B cell (primary cell): ENCODE measurements at regions of chr1 and their contacts with region 1.

Region 1: DNA sequence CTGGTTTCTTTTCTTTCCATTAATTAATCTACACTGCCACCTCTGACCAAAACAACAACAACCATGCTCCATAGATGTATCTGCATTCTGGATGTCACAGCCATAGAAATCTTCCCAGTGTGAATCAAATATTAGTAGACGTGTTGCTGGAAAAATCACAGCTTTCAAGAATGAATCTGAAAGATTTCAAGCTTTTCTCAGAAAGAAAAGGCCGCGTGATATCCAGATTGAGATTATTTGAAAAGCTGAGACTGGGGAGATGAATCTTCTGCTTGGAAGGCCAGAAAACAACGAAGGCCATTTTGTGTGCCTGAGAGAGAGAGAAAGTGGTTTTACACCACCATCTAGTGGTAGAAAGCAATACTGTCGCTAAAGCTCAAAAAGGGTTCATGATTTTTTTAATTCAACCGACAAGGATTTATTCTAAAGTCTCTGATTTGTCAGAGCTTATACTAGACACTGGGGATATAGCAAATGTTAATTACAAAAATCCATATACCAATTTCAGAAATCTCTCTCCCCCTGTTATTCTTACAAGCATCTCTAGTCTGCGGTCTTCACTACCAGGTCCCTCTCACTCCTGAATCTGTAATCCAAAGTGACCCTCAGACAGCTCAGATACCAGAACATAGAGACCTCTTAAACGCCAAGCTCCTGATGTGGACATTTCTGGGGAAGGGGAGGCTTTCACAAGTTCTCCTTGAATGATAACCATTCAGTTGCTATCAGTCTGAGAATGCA is 87.5 kb upstream of the SGIP1 start:
- DNase-seq: peak; percentile 86
- ATAC-seq: peak; percentile 52
- H3K4me3 ChIP-seq: peak overlapping the region in 1 of 5 experiments; percentile 43
- H3K4me3 Mint-ChIP-seq: peak overlapping the region; percentile 62
- H3K27ac ChIP-seq: peak overlapping the region; percentile 73 to 78
- H3K27ac Mint-ChIP-seq: peak overlapping the region; percentile 56
- H3K4me1 ChIP-seq: peaks cover 16 to 18% of the 10 kb centered on the region in 2 donors
- H3K4me1 Mint-ChIP-seq: peaks cover 29% of the 10 kb centered on the region
- H3K27me3 ChIP-seq: no peaks in the 10 kb centered on the region
- H3K27me3 Mint-ChIP-seq: no peaks in the 10 kb centered on the region
- CTCF ChIP-seq: peak; percentile 89

Region 2: GRCh38 chr1:65958561-65959350 is 487.7 kb before region 1 on chr1:
- CTCF ChIA-PET with region 1: interaction called, 171 read pairs
- POLR2A ChIA-PET with region 1: no interaction called
- intact Hi-C with region 1: loop called (anchors 1 kb)
- DNase-seq: peak; percentile 69
- ATAC-seq: no peak
- H3K4me3 ChIP-seq: no peak overlapping the region
- H3K4me3 Mint-ChIP-seq: no peak overlapping the region
- H3K27ac ChIP-seq: no peak overlapping the region
- H3K27ac Mint-ChIP-seq: no peak overlapping the region
- H3K4me1 ChIP-seq: no peaks in the 10 kb centered on the region
- H3K4me1 Mint-ChIP-seq: no peaks in the 10 kb centered on the region
- H3K27me3 ChIP-seq: no peaks in the 10 kb centered on the region
- H3K27me3 Mint-ChIP-seq: peaks cover 8% of the 10 kb centered on the region
- CTCF ChIP-seq: peak; percentile 90

Region 3: DNA sequence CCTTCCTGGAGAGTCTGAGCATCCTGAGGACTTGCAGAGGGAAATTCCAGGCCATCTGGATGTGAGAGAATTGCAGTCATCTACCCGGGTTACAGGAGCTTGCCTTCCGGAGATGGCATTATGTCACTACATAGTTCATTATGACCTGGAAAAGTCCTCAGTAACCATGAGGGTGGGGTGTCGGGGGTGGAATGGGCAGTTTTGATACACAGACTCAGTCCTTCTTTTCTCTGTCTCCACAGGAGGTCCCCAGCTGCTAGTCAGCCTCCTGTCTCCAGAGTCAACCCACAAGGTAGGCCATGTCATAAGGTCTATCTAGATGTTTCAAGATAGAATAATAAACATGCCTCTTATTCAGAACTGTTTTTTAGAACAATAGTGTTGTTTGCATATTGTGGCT is 180.6 kb before region 1 on chr1:
- CTCF ChIA-PET with region 1: interaction called, 53 read pairs
- POLR2A ChIA-PET with region 1: no interaction called
- intact Hi-C with region 1: no loop called
- DNase-seq: no peak
- ATAC-seq: peak; percentile 31
- H3K4me3 ChIP-seq: no peak overlapping the region
- H3K4me3 Mint-ChIP-seq: no peak overlapping the region
- H3K27ac ChIP-seq: no peak overlapping the region
- H3K27ac Mint-ChIP-seq: no peak overlapping the region
- H3K4me1 ChIP-seq: peaks cover 0 to 4% of the 10 kb centered on the region in 2 donors
- H3K4me1 Mint-ChIP-seq: peaks cover 15% of the 10 kb centered on the region
- H3K27me3 ChIP-seq: no peaks in the 10 kb centered on the region
- H3K27me3 Mint-ChIP-seq: no peaks in the 10 kb centered on the region
- CTCF ChIP-seq: no peak

Region 4: DNA sequence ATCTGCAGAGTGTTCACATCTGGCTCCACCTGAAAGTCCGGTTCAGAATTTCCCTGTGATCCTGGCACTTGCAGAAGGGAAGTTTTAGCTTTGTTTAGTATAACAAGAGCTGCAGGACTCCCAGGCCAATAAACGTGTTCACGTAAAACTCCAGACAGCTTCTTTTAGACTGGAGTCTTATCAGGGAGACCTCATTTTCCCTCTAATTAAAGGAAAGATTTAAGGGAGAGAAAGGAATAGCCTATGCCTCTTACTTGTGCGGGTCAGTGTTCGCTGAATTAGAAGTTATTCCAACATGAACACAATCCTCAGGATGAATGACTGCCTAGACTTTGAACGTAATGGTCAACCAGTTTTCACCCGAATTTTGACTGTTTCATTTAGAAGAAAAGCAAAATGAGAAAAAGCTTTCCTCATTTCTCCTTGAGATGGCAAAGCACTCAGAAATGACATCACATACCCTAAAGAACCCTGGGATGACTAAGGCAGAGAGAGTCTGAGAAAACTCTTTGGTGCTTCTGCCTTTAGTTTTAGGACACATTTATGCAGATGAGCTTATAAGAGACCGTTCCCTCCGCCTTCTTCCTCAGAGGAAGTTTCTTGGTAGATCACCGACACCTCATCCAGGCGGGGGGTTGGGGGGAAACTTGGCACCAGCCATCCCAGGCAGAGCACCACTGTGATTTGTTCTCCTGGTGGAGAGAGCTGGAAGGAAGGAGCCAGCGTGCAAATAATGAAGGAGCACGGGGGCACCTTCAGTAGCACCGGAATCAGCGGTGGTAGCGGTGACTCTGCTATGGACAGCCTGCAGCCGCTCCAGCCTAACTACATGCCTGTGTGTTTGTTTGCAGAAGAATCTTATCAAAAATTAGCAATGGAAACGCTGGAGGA is 114.5 kb before region 1 on chr1:
- CTCF ChIA-PET with region 1: interaction called, 94 read pairs
- POLR2A ChIA-PET with region 1: interaction called, 4 read pairs
- intact Hi-C with region 1: loop called (anchors 1 kb)
- DNase-seq: peak; percentile 62
- ATAC-seq: peak; percentile 3
- H3K4me3 ChIP-seq: peak overlapping the region; percentile 69 to 100 (median 90)
- H3K4me3 Mint-ChIP-seq: peak overlapping the region; percentile 99
- H3K27ac ChIP-seq: peak overlapping the region; percentile 94 to 98
- H3K27ac Mint-ChIP-seq: peak overlapping the region; percentile 97
- H3K4me1 ChIP-seq: peaks cover 45 to 58% of the 10 kb centered on the region in 2 donors
- H3K4me1 Mint-ChIP-seq: peaks cover 56% of the 10 kb centered on the region
- H3K27me3 ChIP-seq: no peaks in the 10 kb centered on the region
- H3K27me3 Mint-ChIP-seq: no peaks in the 10 kb centered on the region
- CTCF ChIP-seq: no peak

Region 5: GRCh38 chr1:66360285-66360724 is 86.1 kb before region 1 on chr1:
- CTCF ChIA-PET with region 1: interaction called, 79 read pairs
- POLR2A ChIA-PET with region 1: interaction called, 4 read pairs
- intact Hi-C with region 1: no loop called
- DNase-seq: peak; percentile 38
- ATAC-seq: peak; percentile 61
- H3K4me3 ChIP-seq: no peak overlapping the region
- H3K4me3 Mint-ChIP-seq: peak overlapping the region; percentile 78
- H3K27ac ChIP-seq: peak overlapping the region in 1 of 2 donors; percentile 78
- H3K27ac Mint-ChIP-seq: peak overlapping the region; percentile 82
- H3K4me1 ChIP-seq: peaks cover 34 to 35% of the 10 kb centered on the region in 2 donors
- H3K4me1 Mint-ChIP-seq: peaks cover 84% of the 10 kb centered on the region
- H3K27me3 ChIP-seq: no peaks in the 10 kb centered on the region
- H3K27me3 Mint-ChIP-seq: no peaks in the 10 kb centered on the region
- CTCF ChIP-seq: peak; percentile 56

Region 6: DNA sequence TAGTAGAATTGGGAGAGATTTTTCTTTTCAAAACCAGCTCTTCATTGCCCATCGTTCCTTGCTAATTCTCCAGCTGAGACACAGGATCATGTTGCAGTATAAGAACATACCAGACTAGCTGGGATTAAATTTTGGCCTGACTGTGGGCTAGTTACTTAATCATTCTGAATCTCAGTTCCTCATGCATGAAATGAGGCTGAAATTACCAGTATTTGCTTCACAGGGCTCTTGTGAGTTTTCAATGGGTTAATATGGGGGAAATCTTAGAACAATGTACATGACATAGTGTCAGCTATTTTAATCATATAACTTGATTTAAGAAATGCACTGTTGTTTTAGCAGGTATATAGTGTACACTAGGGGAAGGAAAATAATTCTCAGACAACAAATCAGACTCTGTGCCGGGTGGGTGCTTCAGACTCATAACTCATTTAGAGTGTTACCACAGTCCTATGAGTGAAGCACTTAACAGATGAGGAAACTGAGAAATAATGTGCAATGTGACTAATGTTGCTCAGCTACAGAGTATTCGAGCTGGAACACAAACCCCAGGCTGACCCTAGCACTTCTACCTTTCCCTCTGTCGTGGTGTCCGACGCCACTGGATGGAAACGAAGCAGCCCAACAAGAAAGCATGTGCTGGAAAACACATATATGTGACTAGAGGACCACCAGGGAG is 50.1 kb before region 1 on chr1:
- CTCF ChIA-PET with region 1: interaction called, 56 read pairs
- POLR2A ChIA-PET with region 1: no interaction called
- intact Hi-C with region 1: no loop called
- DNase-seq: no peak
- ATAC-seq: peak; percentile 34
- H3K4me3 ChIP-seq: no peak overlapping the region
- H3K4me3 Mint-ChIP-seq: peak overlapping the region; percentile 46
- H3K27ac ChIP-seq: peak overlapping the region in 1 of 2 donors; percentile 15
- H3K27ac Mint-ChIP-seq: peak overlapping the region; percentile 53
- H3K4me1 ChIP-seq: peaks cover 43 to 52% of the 10 kb centered on the region in 2 donors
- H3K4me1 Mint-ChIP-seq: peaks cover 72% of the 10 kb centered on the region
- H3K27me3 ChIP-seq: no peaks in the 10 kb centered on the region
- H3K27me3 Mint-ChIP-seq: no peaks in the 10 kb centered on the region
- CTCF ChIP-seq: no peak

Region 7: DNA sequence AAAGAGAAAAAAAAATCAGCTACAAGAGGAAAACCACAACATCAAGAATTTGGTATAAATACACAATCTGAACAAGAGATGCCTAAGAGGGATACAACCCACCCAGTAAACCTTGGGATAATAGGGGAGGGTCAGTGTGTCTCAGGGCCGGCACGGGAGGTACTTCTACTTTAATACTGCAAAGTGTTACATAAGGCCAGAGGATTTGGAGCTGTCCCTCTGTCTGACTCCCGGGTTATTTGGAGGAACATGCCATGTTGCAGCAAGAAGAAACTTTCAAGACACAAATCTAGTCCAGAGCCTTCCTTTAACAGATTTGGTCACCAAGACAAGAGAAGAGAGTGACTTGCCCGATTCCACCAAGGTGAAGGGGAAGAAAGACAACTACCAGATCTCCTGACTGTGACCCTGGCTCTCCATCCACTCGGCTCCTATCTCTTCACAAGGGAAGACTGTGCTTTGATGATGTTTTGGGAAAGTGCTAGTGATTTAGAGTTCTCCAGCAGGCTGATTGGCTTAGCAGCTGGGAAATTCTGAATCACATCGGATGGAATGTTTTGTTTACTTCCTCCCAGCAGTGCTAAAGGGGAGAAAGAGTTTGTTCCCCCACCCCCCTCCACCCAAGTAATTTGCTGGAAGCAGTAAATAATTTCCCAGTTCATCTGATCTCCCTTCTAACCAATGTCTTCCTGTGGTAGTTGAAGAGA is 116.8 kb after region 1 on chr1:
- CTCF ChIA-PET with region 1: no interaction called
- POLR2A ChIA-PET with region 1: no interaction called
- intact Hi-C with region 1: no loop called
- DNase-seq: no peak
- ATAC-seq: no peak
- H3K4me3 ChIP-seq: no peak overlapping the region
- H3K4me3 Mint-ChIP-seq: no peak overlapping the region
- H3K27ac ChIP-seq: no peak overlapping the region
- H3K27ac Mint-ChIP-seq: no peak overlapping the region
- H3K4me1 ChIP-seq: no peaks in the 10 kb centered on the region
- H3K4me1 Mint-ChIP-seq: no peaks in the 10 kb centered on the region
- H3K27me3 ChIP-seq: peaks cover 0 to 2% (median 0%) of the 10 kb centered on the region in 4 experiments
- H3K27me3 Mint-ChIP-seq: peaks cover 15% of the 10 kb centered on the region
- CTCF ChIP-seq: no peak

Region 8: GRCh38 chr1:66725885-66726665 is 279.6 kb after region 1 on chr1:
- CTCF ChIA-PET with region 1: interaction called, 14 read pairs
- POLR2A ChIA-PET with region 1: no interaction called
- intact Hi-C with region 1: loop called (anchors 2 kb)
- DNase-seq: peak; percentile 69
- ATAC-seq: no peak
- H3K4me3 ChIP-seq: no peak overlapping the region
- H3K4me3 Mint-ChIP-seq: no peak overlapping the region
- H3K27ac ChIP-seq: no peak overlapping the region
- H3K27ac Mint-ChIP-seq: no peak overlapping the region
- H3K4me1 ChIP-seq: no peaks in the 10 kb centered on the region
- H3K4me1 Mint-ChIP-seq: peaks cover 8% of the 10 kb centered on the region
- H3K27me3 ChIP-seq: no peaks in the 10 kb centered on the region
- H3K27me3 Mint-ChIP-seq: peaks cover 53% of the 10 kb centered on the region
- CTCF ChIP-seq: peak; percentile 93